ENCODE measurements at regions of chr19 and their contacts with region 1.

Region 1: GRCh38 chr19:2977001-2977685 is at the start of gene TLE6:
- DNase-seq: peak; percentile 98
- H3K4me3 ChIP-seq: peak within 1 kb of the TSS; percentile 29 to 35
- H3K27ac ChIP-seq: peak within 1 kb of the TSS in 1 of 2 donors; percentile 7
- H3K4me1 ChIP-seq: peaks cover 8% of the 10 kb centered on the region
- H3K27me3 ChIP-seq: no peaks in the 10 kb centered on the region
- CTCF ChIP-seq: peak in 1 of 4 experiments; percentile 12
- POLR2A ChIP-seq: no peak
- total RNA-seq, gene TLE6: 5.9 to 9.0 TPM

Region 2: GRCh38 chr19:3062168-3063102 is 85.3 kb after region 1 on chr19 and contains the start of gene TLE5:
- intact Hi-C with region 1: loop called (anchors 5 kb)
- DNase-seq: peak; percentile 59
- H3K4me3 ChIP-seq: peak within 1 kb of the TSS; percentile 90 to 95
- H3K27ac ChIP-seq: peak within 1 kb of the TSS; percentile 97 to 99
- H3K4me1 ChIP-seq: peaks cover 12% of the 10 kb centered on the region
- H3K27me3 ChIP-seq: no peaks in the 10 kb centered on the region
- CTCF ChIP-seq: no peak
- POLR2A ChIP-seq: no peak
- total RNA-seq, gene TLE5: 546 to 767 TPM